ENCODE measurements at regions of chr17 and their contacts with region 1.

Region 1: GRCh38 chr17:58317421-58318064 is 11.1 kb downstream of the TSPOAP1 start:
- DNase-seq: peak; percentile 45 to 66 (median 58)
- ATAC-seq: peak; percentile 72
- H3K4me3 ChIP-seq: no peak overlapping the region
- H3K27ac ChIP-seq: no peak overlapping the region
- H3K4me1 ChIP-seq: no peaks in the 10 kb centered on the region
- H3K27me3 ChIP-seq: no peaks in the 10 kb centered on the region
- CTCF ChIP-seq: peak; percentile 46 to 79 (median 60)
- POLR2A ChIP-seq: no peak

Region 2: DNA sequence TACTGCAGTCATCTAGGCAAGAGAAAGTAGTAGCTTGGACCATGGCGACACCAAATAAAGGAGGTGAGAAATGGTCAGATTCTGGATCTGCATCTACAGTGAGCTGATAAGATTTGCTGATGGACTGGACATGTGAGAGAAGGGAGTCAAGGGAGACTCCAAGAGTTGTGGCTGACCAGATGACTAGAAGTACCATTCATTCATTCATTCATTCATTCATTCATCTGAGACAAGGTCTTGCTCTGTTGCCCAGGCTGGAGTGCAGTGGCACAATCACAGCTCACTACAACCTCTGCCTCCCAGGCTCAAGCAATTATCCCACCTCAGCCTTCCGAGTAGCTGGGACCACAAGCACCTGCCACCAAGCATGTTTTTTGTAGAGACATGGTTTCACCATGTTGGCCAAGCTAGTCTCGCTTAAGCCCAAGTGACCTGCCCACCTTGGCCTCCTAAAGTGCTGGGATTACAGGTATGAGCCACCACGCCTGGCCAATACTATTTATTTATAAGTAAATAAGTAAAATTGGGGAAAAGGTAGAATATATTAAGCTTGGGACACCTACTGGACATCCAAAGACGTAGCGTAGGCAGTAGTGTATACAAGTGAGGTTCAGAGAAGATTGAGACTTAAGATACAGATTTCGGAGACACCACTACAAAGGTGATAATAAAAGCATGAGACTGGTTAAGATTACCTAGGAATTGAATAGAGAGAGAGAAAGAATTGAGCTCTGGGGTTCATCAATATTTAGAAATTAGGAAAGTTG is 115.4 kb after region 1 on chr17:
- intact Hi-C with region 1: no loop called
- DNase-seq: no peak
- ATAC-seq: no peak
- H3K4me3 ChIP-seq: no peak overlapping the region
- H3K27ac ChIP-seq: no peak overlapping the region
- H3K4me1 ChIP-seq: no peaks in the 10 kb centered on the region
- H3K27me3 ChIP-seq: no peaks in the 10 kb centered on the region
- CTCF ChIP-seq: no peak
- POLR2A ChIP-seq: no peak

Region 3: GRCh38 chr17:58447039-58447975 is 129.8 kb after region 1 on chr17:
- intact Hi-C with region 1: loop called (anchors 5 kb)
- DNase-seq: peak; percentile 75 to 84 (median 81)
- ATAC-seq: peak; percentile 88
- H3K4me3 ChIP-seq: no peak overlapping the region
- H3K27ac ChIP-seq: no peak overlapping the region
- H3K4me1 ChIP-seq: no peaks in the 10 kb centered on the region
- H3K27me3 ChIP-seq: no peaks in the 10 kb centered on the region
- CTCF ChIP-seq: peak; percentile 58 to 90 (median 85)
- POLR2A ChIP-seq: no peak